ENCODE measurements at regions of chr10 and their contacts with region 1.

Region 1: DNA sequence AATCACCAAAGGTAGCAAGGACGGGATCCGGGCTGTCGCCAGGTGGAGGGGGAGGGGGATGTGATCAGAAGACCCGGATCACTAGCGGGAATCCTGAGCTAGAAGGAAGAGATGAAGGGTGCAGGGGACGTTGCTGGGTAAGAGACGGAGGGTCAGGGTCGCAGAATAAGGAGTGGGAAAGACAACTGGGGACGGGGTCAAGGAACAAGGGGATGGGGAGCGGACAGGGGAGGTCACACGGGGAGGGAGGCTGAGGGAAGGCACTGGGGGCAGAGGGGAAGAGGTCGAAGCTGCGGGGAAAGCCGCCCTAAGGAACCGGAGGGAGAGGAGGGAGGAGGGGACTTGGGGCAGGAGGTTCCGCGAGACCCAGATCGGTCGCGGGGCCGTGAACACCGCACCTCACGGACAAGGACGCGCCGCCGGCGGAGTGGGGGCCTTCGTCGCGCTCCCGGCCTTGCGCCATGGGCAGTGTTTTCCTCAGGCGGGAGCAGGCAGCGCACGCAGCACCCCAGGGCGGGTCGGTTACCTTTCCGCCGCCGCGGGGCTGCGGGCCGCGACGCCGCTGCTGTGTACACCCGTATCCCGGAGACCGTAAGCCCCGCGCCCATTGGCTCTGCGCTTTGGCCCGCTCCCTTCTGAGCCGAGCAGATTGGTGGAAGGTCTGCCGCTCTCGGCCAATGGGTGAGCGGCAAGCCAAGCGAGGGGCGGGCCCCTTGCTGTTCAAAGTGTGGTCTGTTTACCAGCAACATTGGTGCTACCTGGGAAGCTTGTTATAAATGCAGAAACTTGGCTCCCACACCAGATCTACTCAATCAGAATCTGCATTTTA is at the start of gene CFAP43:
- DNase-seq: peak; percentile 99 to 100 (median 99)
- H3K4me3 ChIP-seq: peak within 1 kb of the TSS; percentile 57 to 64
- H3K4me3 Mint-ChIP-seq: peak within 1 kb of the TSS; percentile 84 to 94 (median 90)
- H3K27ac ChIP-seq: peak within 1 kb of the TSS; percentile 49
- H3K27ac Mint-ChIP-seq: peak within 1 kb of the TSS; percentile 82 to 96 (median 92)
- H3K4me1 ChIP-seq: peaks cover 6% of the 10 kb centered on the region
- H3K4me1 Mint-ChIP-seq: peaks cover 6 to 19% (median 11%) of the 10 kb centered on the region in 4 donors
- H3K27me3 ChIP-seq: peaks cover 5% of the 10 kb centered on the region
- H3K27me3 Mint-ChIP-seq: peaks cover 9 to 17% of the 10 kb centered on the region in 2 donors
- total RNA-seq, gene CFAP43: not detected

Region 2: GRCh38 chr10:104254493-104255310 is 22.7 kb after region 1 on chr10 and contains the start of gene GSTO1:
- CTCF ChIA-PET with region 1: interaction called, 4 read pairs
- POLR2A ChIA-PET with region 1: interaction called, 14 read pairs
- intact Hi-C with region 1: loop called (anchors 1 kb)
- DNase-seq: peak in 4 of 5 donors; percentile 22 to 62 (median 31)
- H3K4me3 ChIP-seq: peak within 1 kb of the TSS; percentile 45 to 56
- H3K4me3 Mint-ChIP-seq: peak within 1 kb of the TSS; percentile 84 to 99 (median 98)
- H3K27ac ChIP-seq: peak within 1 kb of the TSS; percentile 75
- H3K27ac Mint-ChIP-seq: peak within 1 kb of the TSS; percentile 82 to 98 (median 96)
- H3K4me1 ChIP-seq: peaks cover 46% of the 10 kb centered on the region
- H3K4me1 Mint-ChIP-seq: peaks cover 36 to 54% (median 44%) of the 10 kb centered on the region in 4 donors
- H3K27me3 ChIP-seq: no peaks in the 10 kb centered on the region
- H3K27me3 Mint-ChIP-seq: peaks cover 0 to 2% of the 10 kb centered on the region in 2 donors
- total RNA-seq, gene GSTO1: 52.8 to 54.7 TPM

Region 3: DNA sequence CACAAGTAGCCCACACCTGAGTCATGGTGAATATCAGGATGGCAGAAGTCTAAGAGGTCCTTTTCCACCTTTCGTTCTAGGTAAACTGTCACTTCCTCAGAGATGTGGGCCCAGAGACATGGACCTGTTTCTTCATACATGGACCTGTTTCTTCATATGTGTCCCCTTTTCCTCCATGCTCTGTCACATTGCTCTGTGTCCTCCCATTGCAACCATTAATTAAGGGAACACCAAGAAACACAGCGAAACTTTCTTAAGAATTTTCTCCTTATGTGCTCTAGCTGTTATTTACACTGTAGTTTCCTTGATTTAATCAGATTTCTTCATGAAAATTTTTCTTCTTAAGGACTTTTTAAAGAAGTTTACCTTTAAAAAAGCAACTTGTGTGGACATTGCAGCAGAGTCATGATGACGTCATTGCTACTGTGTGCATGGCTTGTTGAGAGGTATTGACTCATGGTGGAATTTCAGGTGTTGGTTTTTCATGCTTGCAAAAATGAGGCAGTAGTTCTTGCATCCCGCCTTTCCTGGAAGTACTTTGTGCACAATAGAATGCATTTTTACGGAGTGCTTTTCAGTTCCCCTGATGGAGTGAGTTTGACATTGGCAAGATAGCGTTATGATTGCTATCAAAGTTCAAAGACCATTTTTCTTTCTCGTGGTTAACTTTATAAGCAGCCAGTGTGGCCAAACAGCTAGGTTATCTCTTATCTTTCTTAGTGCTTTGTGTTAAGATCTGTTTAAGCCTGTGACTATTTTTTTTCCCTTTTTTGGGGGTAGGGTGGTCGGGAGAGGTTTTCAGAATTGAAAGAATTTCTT is 159.4 kb after region 1 on chr10:
- CTCF ChIA-PET with region 1: no interaction called
- POLR2A ChIA-PET with region 1: no interaction called
- intact Hi-C with region 1: no loop called
- DNase-seq: no peak
- H3K4me3 ChIP-seq: no peak overlapping the region
- H3K4me3 Mint-ChIP-seq: peak overlapping the region in 2 of 8 donors; percentile 20 to 32
- H3K27ac ChIP-seq: no peak overlapping the region
- H3K27ac Mint-ChIP-seq: no peak overlapping the region
- H3K4me1 ChIP-seq: peaks cover 14% of the 10 kb centered on the region
- H3K4me1 Mint-ChIP-seq: peaks cover 0 to 36% (median 7%) of the 10 kb centered on the region in 4 donors
- H3K27me3 ChIP-seq: no peaks in the 10 kb centered on the region
- H3K27me3 Mint-ChIP-seq: peaks cover 14 to 31% of the 10 kb centered on the region in 2 donors

Region 4: DNA sequence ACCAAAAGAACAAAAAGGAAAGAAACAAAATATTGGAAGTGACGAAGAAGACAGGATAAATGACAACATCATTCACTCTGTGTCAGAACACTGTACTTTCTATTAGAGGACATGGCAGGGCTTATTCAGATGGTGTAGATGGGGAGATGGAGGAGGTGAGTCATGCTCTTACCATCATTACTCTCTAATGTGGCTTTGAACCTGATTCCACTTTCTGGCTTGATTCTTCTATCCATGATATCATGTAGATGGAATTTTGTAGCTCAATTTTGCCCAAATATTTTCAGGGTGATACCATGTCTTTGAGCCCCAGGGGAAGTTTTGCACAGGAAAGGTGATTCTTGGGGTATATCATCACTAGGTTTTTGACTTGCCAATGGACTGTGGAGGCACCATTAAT is 213.4 kb after region 1 on chr10:
- CTCF ChIA-PET with region 1: no interaction called
- POLR2A ChIA-PET with region 1: no interaction called
- intact Hi-C with region 1: no loop called
- DNase-seq: no peak
- H3K4me3 ChIP-seq: no peak overlapping the region
- H3K4me3 Mint-ChIP-seq: no peak overlapping the region
- H3K27ac ChIP-seq: no peak overlapping the region
- H3K27ac Mint-ChIP-seq: no peak overlapping the region
- H3K4me1 ChIP-seq: no peaks in the 10 kb centered on the region
- H3K4me1 Mint-ChIP-seq: no peaks in the 10 kb centered on the region
- H3K27me3 ChIP-seq: no peaks in the 10 kb centered on the region
- H3K27me3 Mint-ChIP-seq: peaks cover 8 to 24% of the 10 kb centered on the region in 2 donors

Region 5: DNA sequence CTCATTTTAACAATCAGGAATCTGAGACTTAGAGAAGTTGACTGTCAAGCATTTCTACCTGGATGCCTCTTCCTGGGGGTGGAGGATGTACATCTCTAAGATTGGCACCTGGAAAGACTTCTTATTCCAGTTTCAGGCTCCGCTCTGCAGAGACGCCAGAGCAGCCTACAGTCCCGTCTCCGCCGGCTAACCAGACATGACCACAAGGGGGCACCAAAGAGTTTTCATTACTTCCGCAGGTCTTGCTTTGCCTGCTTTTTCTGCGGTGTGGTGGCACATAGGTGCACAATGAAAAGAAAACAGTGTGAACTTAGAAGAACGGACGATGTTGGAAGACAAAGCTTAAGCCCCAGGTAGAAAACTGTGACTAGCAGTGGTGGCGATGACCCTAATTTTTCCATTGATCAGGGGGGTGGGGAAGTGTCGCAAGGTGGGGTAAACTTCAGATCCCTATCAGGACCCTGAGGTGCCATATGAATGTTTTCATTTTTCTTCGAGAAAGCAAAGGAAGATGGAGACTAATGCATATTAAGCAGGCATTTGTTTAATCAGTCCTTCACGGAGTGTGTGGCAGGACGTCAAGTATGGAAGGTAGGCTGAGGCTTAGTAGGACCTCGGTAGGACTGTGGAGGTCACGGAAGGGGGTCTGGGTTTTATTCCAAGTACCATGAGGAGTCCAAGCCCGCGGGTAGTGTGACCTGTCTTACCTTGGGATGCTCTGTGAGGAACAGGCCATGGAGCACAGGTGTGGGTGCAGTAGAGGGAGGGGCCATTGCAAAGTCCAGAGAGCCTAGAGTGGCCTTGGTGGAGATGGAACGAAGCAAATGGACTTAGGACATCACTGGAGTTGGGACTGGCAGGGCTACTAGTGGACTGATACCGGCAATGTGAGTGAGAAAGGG is 349.0 kb after region 1 on chr10:
- CTCF ChIA-PET with region 1: no interaction called
- POLR2A ChIA-PET with region 1: no interaction called
- intact Hi-C with region 1: no loop called
- DNase-seq: peak; percentile 48 to 62 (median 60)
- H3K4me3 ChIP-seq: no peak overlapping the region
- H3K4me3 Mint-ChIP-seq: peak overlapping the region in 2 of 8 donors; percentile 38 to 60
- H3K27ac ChIP-seq: no peak overlapping the region
- H3K27ac Mint-ChIP-seq: peak overlapping the region in 2 of 7 donors; percentile 0 to 10
- H3K4me1 ChIP-seq: no peaks in the 10 kb centered on the region
- H3K4me1 Mint-ChIP-seq: peaks cover 6 to 13% (median 9%) of the 10 kb centered on the region in 4 donors
- H3K27me3 ChIP-seq: no peaks in the 10 kb centered on the region
- H3K27me3 Mint-ChIP-seq: peaks cover 16 to 32% of the 10 kb centered on the region in 2 donors